Heart left ventricle (tissue), 16 donors: ENCODE measurements at regions of chr10 and their contacts with region 1.

Region 1: GRCh38 chr10:10642751-10643150 is 374.9 kb upstream of the CELF2 start:
- DNase-seq: peak; percentile 61 to 86 (median 64)
- ATAC-seq: peak; percentile 79 to 94 (median 88)
- H3K4me3 ChIP-seq: no peak overlapping the region
- H3K27ac ChIP-seq: peak overlapping the region; percentile 13 to 93 (median 70)
- H3K4me1 ChIP-seq: peaks cover 0 to 38% (median 18%) of the 10 kb centered on the region in 12 donors
- H3K27me3 ChIP-seq: no peaks in the 10 kb centered on the region
- CTCF ChIP-seq: no peak
- POLR2A ChIP-seq: no peak

Region 2: GRCh38 chr10:10515479-10516204 is 127.1 kb before region 1 on chr10:
- intact Hi-C with region 1: loop called in 1 of 10 experiments (anchors 10 kb)
- DNase-seq: no peak
- ATAC-seq: peak in 2 of 4 donors; percentile 22 to 71
- H3K4me3 ChIP-seq: peak overlapping the region in 3 of 12 donors; percentile 0 to 19 (median 8)
- H3K27ac ChIP-seq: no peak overlapping the region
- H3K4me1 ChIP-seq: peaks cover 0 to 6% (median 0%) of the 10 kb centered on the region in 12 donors
- H3K27me3 ChIP-seq: no peaks in the 10 kb centered on the region
- CTCF ChIP-seq: no peak
- POLR2A ChIP-seq: no peak

Region 3: DNA sequence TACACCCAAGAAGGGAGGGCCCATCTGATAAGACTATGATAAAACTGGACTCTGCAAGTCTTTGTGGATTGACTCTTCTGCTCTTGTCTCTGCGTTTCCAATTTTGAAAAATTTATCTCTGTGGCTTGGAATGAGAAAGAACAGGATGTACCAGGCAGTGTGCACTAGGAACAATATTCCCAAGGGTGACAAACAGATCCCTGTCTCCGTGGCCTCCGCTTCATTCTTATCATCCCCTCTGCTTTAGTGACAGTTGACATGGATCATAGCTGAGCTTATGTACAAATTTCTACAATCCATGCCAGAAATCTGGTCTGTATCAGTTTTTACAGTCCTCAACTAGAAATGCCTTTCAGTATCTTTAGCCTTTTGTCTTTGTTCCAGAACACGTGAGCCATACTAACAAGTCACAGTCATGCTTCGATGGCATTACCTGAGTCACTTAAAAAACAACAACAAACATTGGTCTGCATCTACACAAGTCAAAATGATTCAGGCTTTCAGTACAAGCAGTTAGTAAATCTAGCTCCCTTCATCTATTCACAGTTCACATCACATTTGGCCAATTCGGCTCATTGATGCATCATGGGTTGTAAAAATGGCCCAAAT is 18.7 kb before region 1 on chr10:
- intact Hi-C with region 1: loop called in 1 of 10 experiments (anchors 2 kb)
- DNase-seq: no peak
- ATAC-seq: peak; percentile 79 to 94 (median 92)
- H3K4me3 ChIP-seq: no peak overlapping the region
- H3K27ac ChIP-seq: peak overlapping the region; percentile 3 to 61 (median 52)
- H3K4me1 ChIP-seq: peaks cover 0 to 35% (median 12%) of the 10 kb centered on the region in 12 donors
- H3K27me3 ChIP-seq: no peaks in the 10 kb centered on the region
- CTCF ChIP-seq: no peak
- POLR2A ChIP-seq: no peak

Region 4: GRCh38 chr10:10891124-10892082 is 248.7 kb after region 1 on chr10:
- intact Hi-C with region 1: no loop called
- DNase-seq: peak in 1 of 5 donors; percentile 31
- ATAC-seq: peak in 3 of 4 donors; percentile 32 to 64 (median 60)
- H3K4me3 ChIP-seq: no peak overlapping the region
- H3K27ac ChIP-seq: peak overlapping the region in 3 of 12 donors; percentile 59 to 67 (median 61)
- H3K4me1 ChIP-seq: peaks cover 0 to 31% (median 14%) of the 10 kb centered on the region in 12 donors
- H3K27me3 ChIP-seq: no peaks in the 10 kb centered on the region
- CTCF ChIP-seq: no peak
- POLR2A ChIP-seq: no peak